ENCODE measurements at regions of chr14 and their contacts with region 1.

Region 1: GRCh38 chr14:71776471-71777360 is 155.5 kb upstream of the RGS6 start:
- DNase-seq: no peak
- ATAC-seq: no peak
- H3K4me3 ChIP-seq: no peak overlapping the region
- H3K27ac ChIP-seq: no peak overlapping the region
- H3K4me1 ChIP-seq: no peaks in the 10 kb centered on the region
- H3K27me3 ChIP-seq: 0 out of 2 replicates have a peak, but pooled peaks cover 2% of the 10 kb centered on the region
- CTCF ChIP-seq: no peak

Region 2: DNA sequence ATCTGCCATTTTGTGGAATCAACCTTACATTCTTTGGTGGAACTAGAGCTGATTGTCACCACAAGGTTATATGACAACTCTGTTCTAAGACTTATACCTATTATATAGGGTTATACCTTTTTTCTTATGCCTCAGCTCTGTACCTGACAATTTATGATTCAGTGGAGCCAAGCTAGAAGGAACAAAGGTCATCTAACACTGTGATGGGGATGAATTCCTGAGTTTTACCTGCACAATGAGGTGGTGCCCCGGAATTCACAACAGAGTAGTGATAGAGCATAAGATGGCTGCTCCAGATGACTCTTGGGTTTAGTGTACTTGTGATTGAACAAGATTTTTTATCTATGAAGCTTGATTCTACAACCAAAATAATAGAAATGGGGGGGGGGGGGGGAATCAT is 662.2 kb before region 1 on chr14:
- CTCF ChIA-PET with region 1: no interaction called
- POLR2A ChIA-PET with region 1: interaction called, 12 read pairs
- in situ Hi-C with region 1: no loop called
- intact Hi-C with region 1: no loop called
- DNase-seq: no peak
- ATAC-seq: no peak
- H3K4me3 ChIP-seq: no peak overlapping the region
- H3K27ac ChIP-seq: no peak overlapping the region
- H3K4me1 ChIP-seq: no peaks in the 10 kb centered on the region
- H3K27me3 ChIP-seq: no peaks in the 10 kb centered on the region
- CTCF ChIP-seq: no peak

Region 3: DNA sequence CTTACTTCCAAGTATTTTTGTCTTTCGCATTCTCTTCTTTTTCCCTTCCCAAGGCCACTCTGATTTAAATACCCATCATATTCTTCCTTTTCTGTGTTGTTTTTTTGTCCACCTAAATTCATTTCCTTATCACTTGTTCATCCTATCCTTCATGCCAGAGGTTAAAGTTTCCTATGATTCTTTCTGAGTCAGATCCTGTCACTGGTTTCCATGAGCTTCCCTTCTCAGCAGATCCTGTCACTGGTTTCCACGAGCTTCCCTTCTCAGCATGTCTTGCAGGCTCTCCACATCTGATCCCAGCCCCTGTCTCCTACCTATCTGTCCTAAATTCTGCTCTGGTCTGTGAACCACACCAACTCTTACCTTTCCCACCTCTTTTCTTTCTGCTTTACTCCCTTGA is 156.3 kb before region 1 on chr14:
- CTCF ChIA-PET with region 1: no interaction called
- POLR2A ChIA-PET with region 1: no interaction called
- in situ Hi-C with region 1: no loop called
- intact Hi-C with region 1: no loop called
- DNase-seq: no peak
- ATAC-seq: no peak
- H3K4me3 ChIP-seq: no peak overlapping the region
- H3K27ac ChIP-seq: no peak overlapping the region
- H3K4me1 ChIP-seq: no peaks in the 10 kb centered on the region
- H3K27me3 ChIP-seq: no peaks in the 10 kb centered on the region
- CTCF ChIP-seq: no peak